PC-3 (cell line): ENCODE measurements at regions of chr2 and their contacts with region 1.

Region 1: DNA sequence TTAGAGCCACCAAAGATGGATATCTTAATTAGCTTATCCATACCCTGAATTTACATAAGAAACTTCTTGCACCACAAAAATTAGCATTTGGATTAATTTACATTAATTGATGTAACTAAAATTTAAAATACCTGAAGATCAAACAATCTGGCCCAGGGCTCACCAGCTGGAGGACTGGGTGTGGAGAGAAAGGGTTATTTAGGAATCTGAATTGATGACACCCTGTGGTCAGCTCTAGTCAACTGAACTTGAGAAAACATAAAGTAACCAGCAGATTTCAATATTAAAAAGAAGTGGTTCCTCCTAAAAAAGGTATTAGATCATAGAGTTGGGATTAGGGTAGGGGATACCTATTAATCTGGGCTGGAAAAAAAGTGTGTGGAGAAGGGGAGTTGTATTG is 122.5 kb downstream of the STRN start:
- DNase-seq: no peak
- ATAC-seq: no peak
- H3K4me3 ChIP-seq: no peak overlapping the region
- H3K27ac ChIP-seq: no peak overlapping the region
- H3K4me1 ChIP-seq: peaks cover 6% of the 10 kb centered on the region; the same call in 1 of the 2 replicates
- H3K27me3 ChIP-seq: no peaks in the 10 kb centered on the region
- CTCF ChIP-seq: no peak

Region 2: DNA sequence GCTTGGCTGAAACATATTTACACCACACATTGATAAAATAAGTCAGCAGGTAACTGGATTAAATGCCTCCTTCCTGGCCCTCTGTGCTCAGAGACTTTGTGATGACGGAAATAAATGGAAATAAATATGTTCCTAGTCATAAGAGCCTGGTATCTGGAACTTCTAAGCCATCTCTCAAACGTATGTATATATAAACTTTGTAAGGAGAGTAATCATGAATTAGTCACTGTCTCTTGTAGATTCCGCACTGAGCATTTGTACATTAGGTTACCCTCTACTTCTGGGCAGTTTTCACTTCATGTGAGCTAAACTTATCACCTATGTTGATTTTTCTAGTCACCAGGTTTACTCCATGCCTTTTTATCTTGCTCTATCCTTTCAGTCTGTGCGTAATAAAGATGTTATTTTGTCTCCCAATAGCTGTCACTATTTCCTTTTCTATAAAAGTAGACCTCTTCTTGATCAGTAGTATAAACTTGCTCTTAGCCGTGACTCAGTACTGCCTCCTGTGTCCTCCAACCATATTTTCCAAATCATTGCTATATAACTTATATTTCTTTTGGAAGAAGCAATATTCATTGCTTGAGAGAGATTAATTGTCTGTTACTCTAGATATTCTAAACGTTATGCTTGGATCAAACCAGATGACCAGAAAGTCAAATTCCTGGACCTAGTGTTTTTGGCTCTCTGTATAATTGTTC is 299.1 kb before region 1 on chr2:
- CTCF ChIA-PET with region 1: no interaction called
- POLR2A ChIA-PET with region 1: interaction called, 30 read pairs
- intact Hi-C with region 1: no loop called
- DNase-seq: peak; percentile 35
- ATAC-seq: peak; percentile 5; the same call in 1 of the 2 replicates
- H3K4me3 ChIP-seq: no peak overlapping the region
- H3K27ac ChIP-seq: no peak overlapping the region
- H3K4me1 ChIP-seq: peaks cover 1% of the 10 kb centered on the region
- H3K27me3 ChIP-seq: no peaks in the 10 kb centered on the region
- CTCF ChIP-seq: peak; percentile 65

Region 3: DNA sequence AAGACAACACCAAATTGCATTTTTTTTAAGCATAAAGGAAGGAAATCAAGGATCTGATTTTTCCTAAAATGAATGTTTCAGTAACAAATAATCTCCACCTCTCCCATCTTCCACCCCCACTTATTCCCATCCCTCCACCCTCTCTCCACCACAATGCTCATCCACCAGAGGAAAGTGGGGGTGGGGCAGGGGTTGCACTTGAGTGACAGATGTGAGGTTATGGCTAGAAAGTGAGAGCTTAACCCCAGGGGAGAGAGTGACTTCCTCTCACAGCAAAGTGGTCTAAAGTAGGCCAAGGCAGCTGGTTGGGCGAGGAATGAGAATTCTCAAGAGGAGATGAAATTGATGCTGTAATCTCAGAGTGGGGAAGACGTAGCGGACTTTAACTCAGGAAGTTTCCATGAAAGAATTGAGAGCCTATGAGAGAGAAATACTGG is 1654.2 kb after region 1 on chr2:
- CTCF ChIA-PET with region 1: no interaction called
- POLR2A ChIA-PET with region 1: interaction called, 12 read pairs
- intact Hi-C with region 1: no loop called
- DNase-seq: no peak
- ATAC-seq: no peak
- H3K4me3 ChIP-seq: no peak overlapping the region
- H3K27ac ChIP-seq: no peak overlapping the region
- H3K4me1 ChIP-seq: no peaks in the 10 kb centered on the region
- H3K27me3 ChIP-seq: no peaks in the 10 kb centered on the region
- CTCF ChIP-seq: no peak